Endothelial cell of umbilical vein (primary cell): ENCODE measurements at regions of chr2 and their contacts with region 1.

Region 1: GRCh38 chr2:112764071-112765044 is at the start of gene CKAP2L:
- DNase-seq: peak; percentile 98
- H3K4me3 ChIP-seq: peak within 1 kb of the TSS; percentile 78 to 90 (median 87)
- H3K27ac ChIP-seq: peak within 1 kb of the TSS; percentile 34
- H3K4me1 ChIP-seq: peaks cover 21% of the 10 kb centered on the region
- H3K27me3 ChIP-seq: no peaks in the 10 kb centered on the region
- CTCF ChIP-seq: no peak
- POLR2A ChIP-seq: peak; percentile 52
- total RNA-seq, gene CKAP2L: 25.2 and 30.7 TPM in 2 replicates

Region 2: DNA sequence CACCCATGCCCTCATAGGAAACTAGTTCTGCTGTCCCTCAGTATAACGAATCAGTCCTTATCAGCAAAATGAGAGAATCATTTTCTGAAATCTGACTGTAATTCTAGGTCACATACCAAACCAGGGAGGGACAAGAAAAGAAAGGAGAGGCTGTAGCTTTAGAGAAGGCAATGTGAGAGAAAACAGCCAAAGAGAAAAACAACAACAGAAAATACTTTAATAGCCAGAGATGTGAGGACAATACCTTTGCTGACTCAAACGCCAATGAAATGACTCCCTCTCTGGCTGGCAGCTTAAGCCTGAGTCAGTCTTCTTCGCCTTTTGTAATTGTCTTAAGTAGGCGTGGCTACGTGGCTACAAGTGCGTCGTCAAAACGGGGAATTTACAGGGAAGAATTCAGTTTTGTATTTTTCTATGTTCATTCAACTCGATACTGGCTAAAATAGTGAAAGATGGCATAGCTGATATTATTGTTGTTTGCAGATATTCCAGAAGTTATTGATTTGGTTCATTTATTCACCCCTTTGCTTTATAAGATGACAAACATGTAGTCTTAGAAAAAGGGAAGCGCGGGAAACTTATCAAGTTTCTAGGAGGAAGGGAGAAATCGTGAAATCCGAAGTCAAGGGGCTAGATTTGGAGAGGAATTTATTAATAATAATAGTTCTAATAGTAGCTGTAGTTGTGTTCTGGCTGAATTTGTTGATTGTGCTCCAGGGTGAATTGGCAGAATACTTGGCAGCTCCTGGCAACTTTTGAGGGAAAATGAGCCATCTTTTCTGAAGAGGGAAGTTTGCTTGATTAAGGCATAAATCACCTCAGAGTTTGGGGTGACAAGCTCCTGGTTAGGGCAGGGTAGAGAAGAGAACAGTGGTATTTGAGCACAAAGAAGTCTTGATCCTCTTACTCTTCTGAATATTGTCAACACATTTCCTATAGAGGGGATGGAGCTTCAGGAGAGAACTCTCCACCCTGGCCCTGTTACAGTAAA is 20.1 kb after region 1 on chr2 and contains the start of gene IL1A:
- CTCF ChIA-PET with region 1: interaction called, 6 read pairs
- POLR2A ChIA-PET with region 1: no interaction called
- dilution Hi-C with region 1: no loop called
- intact Hi-C with region 1: loop called (anchors 1 kb)
- DNase-seq: peak; percentile 73
- H3K4me3 ChIP-seq: peak within 1 kb of the TSS in 1 of 3 experiments; percentile 37
- H3K27ac ChIP-seq: peak within 1 kb of the TSS; percentile 73
- H3K4me1 ChIP-seq: peaks cover 43% of the 10 kb centered on the region
- H3K27me3 ChIP-seq: no peaks in the 10 kb centered on the region
- CTCF ChIP-seq: no peak
- POLR2A ChIP-seq: no peak
- total RNA-seq, gene IL1A: 0.99 and 1.4 TPM in 2 replicates

Region 3: DNA sequence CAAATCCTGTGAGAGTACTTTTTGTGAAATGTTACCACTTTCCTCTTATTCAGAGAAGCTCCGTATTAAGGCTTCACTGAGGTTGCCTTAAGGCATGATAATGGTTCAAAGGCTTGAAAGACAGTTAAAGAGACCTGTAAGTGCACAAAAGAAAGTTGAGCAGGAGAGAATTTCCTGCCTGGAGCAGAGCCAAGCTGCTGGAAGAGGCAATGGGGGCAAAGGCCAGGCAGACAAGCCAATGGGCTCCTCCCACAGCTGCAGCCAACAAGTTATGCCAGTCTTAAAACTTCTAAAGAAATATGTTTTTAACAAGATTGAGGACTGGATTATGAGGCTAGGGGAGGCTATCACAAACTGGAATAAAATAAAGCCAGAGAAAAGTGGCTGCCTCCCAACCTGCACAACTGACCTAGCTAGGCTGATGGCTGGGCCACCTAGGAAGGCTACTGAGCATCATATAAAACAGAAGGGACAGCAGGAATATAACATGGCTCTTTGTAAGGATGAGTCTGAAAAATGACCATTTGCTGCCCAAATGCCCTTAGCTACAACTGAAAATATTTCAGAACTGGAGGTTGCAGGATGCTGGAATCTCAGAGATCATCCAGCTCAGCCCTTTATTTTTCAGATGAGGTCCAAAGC is 70.2 kb after region 1 on chr2:
- CTCF ChIA-PET with region 1: no interaction called
- POLR2A ChIA-PET with region 1: no interaction called
- dilution Hi-C with region 1: no loop called
- intact Hi-C with region 1: loop called (anchors 5 kb)
- DNase-seq: peak; percentile 28
- H3K4me3 ChIP-seq: no peak overlapping the region
- H3K27ac ChIP-seq: no peak overlapping the region
- H3K4me1 ChIP-seq: peaks cover 19% of the 10 kb centered on the region
- H3K27me3 ChIP-seq: peaks cover 0 to 12% of the 10 kb centered on the region in 2 experiments
- CTCF ChIP-seq: no peak
- POLR2A ChIP-seq: no peak

Region 4: GRCh38 chr2:112869258-112869885 is 105.0 kb after region 1 on chr2:
- CTCF ChIA-PET with region 1: no interaction called
- POLR2A ChIA-PET with region 1: no interaction called
- dilution Hi-C with region 1: no loop called
- intact Hi-C with region 1: loop called (anchors 1 kb)
- DNase-seq: peak; percentile 64
- H3K4me3 ChIP-seq: no peak overlapping the region
- H3K27ac ChIP-seq: no peak overlapping the region
- H3K4me1 ChIP-seq: peaks cover 12% of the 10 kb centered on the region
- H3K27me3 ChIP-seq: peaks cover 5 to 9% of the 10 kb centered on the region in 2 experiments
- CTCF ChIP-seq: no peak
- POLR2A ChIP-seq: no peak

Region 5: DNA sequence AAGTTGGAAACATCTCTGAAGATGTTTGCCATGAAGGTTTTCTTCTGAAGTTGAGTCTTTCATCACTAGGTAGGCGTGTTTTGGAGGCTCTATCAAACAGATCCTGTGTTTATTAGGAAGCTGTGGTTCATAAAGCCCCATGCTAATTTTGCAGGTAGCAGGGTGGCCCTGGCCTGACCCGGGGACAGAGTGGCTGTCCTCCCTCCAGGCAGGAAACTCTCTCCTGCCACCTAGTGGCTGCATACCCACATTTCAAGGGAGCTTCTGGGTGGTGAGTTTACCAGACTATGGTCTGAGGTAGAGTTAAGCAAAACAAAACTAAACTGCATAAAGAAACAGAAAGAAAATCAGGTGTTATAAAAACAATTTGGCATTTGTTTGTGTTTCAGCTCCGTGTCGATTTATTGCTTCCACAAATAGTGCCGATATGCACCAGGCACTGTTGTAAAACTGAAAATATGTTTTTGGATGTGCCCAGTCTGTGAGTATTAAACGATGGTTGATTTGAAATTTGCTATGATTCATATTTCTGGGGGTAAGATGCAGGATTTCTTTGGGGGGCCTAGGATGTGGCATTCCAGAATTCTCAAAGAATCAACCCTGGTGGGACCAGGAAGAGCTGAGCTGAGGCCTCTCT is 120.6 kb after region 1 on chr2:
- CTCF ChIA-PET with region 1: interaction called, 19 read pairs
- POLR2A ChIA-PET with region 1: no interaction called
- dilution Hi-C with region 1: no loop called
- intact Hi-C with region 1: loop called (anchors 1 kb)
- DNase-seq: peak; percentile 38
- H3K4me3 ChIP-seq: no peak overlapping the region
- H3K27ac ChIP-seq: no peak overlapping the region
- H3K4me1 ChIP-seq: peaks cover 19% of the 10 kb centered on the region
- H3K27me3 ChIP-seq: no peaks in the 10 kb centered on the region
- CTCF ChIP-seq: peak; percentile 59 to 74
- POLR2A ChIP-seq: no peak

Region 6: DNA sequence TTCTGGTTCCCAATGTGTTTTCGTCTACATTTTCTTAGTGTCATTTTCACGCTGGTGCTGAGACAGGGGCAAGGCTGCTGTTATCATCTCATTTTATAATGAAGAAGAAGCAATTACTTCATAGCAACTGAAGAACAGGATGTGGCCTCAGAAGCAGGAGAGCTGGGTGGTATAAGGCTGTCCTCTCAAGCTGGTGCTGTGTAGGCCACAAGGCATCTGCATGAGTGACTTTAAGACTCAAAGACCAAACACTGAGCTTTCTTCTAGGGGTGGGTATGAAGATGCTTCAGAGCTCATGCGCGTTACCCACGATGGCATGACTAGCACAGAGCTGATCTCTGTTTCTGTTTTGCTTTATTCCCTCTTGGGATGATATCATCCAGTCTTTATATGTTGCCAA is 220.7 kb after region 1 on chr2:
- CTCF ChIA-PET with region 1: no interaction called
- POLR2A ChIA-PET with region 1: no interaction called
- dilution Hi-C with region 1: no loop called
- intact Hi-C with region 1: no loop called
- DNase-seq: no peak
- H3K4me3 ChIP-seq: no peak overlapping the region
- H3K27ac ChIP-seq: no peak overlapping the region
- H3K4me1 ChIP-seq: no peaks in the 10 kb centered on the region
- H3K27me3 ChIP-seq: peaks cover 3 to 4% of the 10 kb centered on the region in 2 experiments
- CTCF ChIP-seq: no peak
- POLR2A ChIP-seq: no peak